HepG2 (cell line): ENCODE measurements at regions of chr5 and their contacts with region 1.

Region 1: GRCh38 chr5:33423018-33423630 is 17.6 kb upstream of the TARS1 start:
- DNase-seq: peak; percentile 6
- ATAC-seq: peak; percentile 50
- H3K4me3 ChIP-seq: no peak overlapping the region
- H3K27ac ChIP-seq: no peak overlapping the region
- H3K4me1 ChIP-seq: no peaks in the 10 kb centered on the region
- H3K27me3 ChIP-seq: no peaks in the 10 kb centered on the region; a peak in 1 of 5 replicates
- CTCF ChIP-seq: peak; percentile 53
- EP300 ChIP-seq: no peak
- POLR2A ChIP-seq: no peak
- RAD21 ChIP-seq: no peak

Region 2: DNA sequence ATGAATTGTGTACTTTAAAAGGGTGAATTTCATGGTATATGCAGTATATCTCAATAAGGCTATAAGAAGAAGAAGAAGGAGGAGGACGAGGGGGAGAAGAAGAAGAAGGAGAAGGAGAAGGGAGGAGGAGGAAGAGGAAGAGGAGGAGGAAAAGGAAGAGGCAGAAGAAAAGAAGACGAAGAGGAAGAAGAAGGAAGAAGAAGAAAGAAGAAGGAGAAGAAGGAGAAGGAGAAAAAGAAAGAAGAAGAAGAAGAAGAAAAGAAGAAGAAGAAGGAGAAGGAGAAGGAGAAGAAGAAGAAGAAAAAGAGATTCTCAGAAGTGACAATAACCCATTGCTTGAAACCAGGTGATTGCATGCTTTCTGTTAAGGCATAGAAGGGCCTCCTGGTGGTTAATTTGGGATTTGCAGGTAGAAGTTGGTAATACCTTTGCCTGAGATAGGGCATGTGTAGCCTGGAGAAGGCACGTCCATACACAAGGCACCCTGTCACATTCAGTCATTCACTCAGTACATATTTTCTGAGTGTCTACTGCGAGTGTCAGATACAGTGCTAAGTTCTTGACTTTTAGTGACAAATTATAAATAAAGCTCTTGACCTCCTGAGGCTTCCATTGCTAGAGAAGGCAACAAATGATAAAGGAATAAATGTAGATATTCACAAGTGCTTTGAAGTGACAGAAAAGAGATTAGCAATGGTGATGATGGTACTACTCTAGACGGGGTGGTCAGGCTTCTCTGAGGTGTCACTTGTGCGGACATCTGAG is 480.7 kb before region 1 on chr5:
- CTCF ChIA-PET with region 1: no interaction called
- POLR2A ChIA-PET with region 1: no interaction called
- in situ Hi-C with region 1: loop called (anchors 25 kb)
- intact Hi-C with region 1: loop called (anchors 5 kb)
- DNase-seq: peak; percentile 38
- ATAC-seq: peak; percentile 88
- H3K4me3 ChIP-seq: no peak overlapping the region
- H3K27ac ChIP-seq: no peak overlapping the region
- H3K4me1 ChIP-seq: no peaks in the 10 kb centered on the region
- H3K27me3 ChIP-seq: no peaks in the 10 kb centered on the region; a peak in 1 of 5 replicates
- CTCF ChIP-seq: peak; percentile 57
- EP300 ChIP-seq: no peak
- POLR2A ChIP-seq: no peak
- RAD21 ChIP-seq: no peak

Region 3: DNA sequence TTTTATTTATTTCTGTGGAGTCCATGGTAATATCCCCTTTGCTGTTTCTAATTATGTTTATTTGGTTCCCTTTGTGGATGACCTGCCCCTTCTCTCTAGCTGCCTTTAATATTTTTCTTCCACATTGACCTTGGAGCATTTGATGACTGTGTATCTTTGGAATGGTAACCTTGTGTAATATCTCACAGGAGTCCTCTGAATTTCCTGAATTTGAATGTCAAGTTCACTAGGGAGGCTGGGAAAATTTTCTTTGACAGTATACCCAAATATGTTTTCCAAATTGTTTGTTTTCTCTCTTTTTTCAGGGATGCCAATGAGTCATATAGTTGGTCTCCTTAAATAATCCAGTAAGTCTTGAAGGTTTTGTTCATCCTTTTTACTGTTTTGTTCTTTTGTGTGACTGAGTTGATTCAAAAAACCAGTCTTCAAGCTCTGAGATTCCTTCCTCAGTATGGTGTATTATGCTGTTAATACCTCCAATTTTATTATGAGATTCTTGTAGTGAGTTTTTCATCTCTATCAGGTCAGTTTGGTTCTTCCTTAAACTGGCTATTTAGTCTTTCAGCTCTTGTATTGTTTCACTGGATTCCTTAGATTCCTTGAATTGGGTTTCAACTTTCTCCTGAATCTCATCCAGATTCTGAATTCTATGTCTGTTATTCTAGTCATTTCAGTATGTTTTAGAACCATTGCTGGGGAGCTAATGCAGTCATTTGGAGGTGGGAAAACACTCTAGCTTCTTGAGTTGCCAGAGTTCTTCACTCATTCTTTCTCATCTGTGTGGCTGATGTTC is 331.4 kb before region 1 on chr5:
- CTCF ChIA-PET with region 1: no interaction called
- POLR2A ChIA-PET with region 1: no interaction called
- in situ Hi-C with region 1: no loop called
- intact Hi-C with region 1: no loop called
- DNase-seq: no peak
- ATAC-seq: no peak
- H3K4me3 ChIP-seq: no peak overlapping the region
- H3K27ac ChIP-seq: no peak overlapping the region
- H3K4me1 ChIP-seq: no peaks in the 10 kb centered on the region
- H3K27me3 ChIP-seq: no peaks in the 10 kb centered on the region
- CTCF ChIP-seq: no peak
- EP300 ChIP-seq: no peak
- POLR2A ChIP-seq: no peak
- RAD21 ChIP-seq: no peak

Region 4: GRCh38 chr5:33166522-33166921 is 256.6 kb before region 1 on chr5:
- CTCF ChIA-PET with region 1: no interaction called
- POLR2A ChIA-PET with region 1: no interaction called
- in situ Hi-C with region 1: no loop called
- intact Hi-C with region 1: loop called (anchors 2 kb)
- DNase-seq: no peak
- ATAC-seq: no peak
- H3K4me3 ChIP-seq: no peak overlapping the region
- H3K27ac ChIP-seq: no peak overlapping the region
- H3K4me1 ChIP-seq: no peaks in the 10 kb centered on the region
- H3K27me3 ChIP-seq: no peaks in the 10 kb centered on the region
- CTCF ChIP-seq: no peak
- EP300 ChIP-seq: no peak
- POLR2A ChIP-seq: no peak
- RAD21 ChIP-seq: no peak